PC-9 (cell line): ENCODE measurements at regions of chr10 and their contacts with region 1.

Region 1: GRCh38 chr10:79347226-79347893 is at the start of gene PPIF:
- DNase-seq: peak; percentile 76 to 97
- H3K4me3 ChIP-seq: peak within 1 kb of the TSS; percentile 87
- H3K27ac ChIP-seq: peak within 1 kb of the TSS; percentile 87
- H3K4me1 ChIP-seq: peaks cover 29% of the 10 kb centered on the region
- H3K27me3 ChIP-seq: no peaks in the 10 kb centered on the region
- CTCF ChIP-seq: peak; percentile 98
- total RNA-seq, gene PPIF: 171 and 203 TPM in 2 replicates

Region 2: GRCh38 chr10:79101560-79102497 is 245.5 kb before region 1 on chr10:
- CTCF ChIA-PET with region 1: no interaction called
- POLR2A ChIA-PET with region 1: no interaction called
- intact Hi-C with region 1: no loop called
- DNase-seq: no peak
- H3K4me3 ChIP-seq: no peak overlapping the region
- H3K27ac ChIP-seq: no peak overlapping the region
- H3K4me1 ChIP-seq: no peaks in the 10 kb centered on the region; the same call in 1 of the 2 replicates
- H3K27me3 ChIP-seq: no peaks in the 10 kb centered on the region
- CTCF ChIP-seq: no peak

Region 3: GRCh38 chr10:79298403-79299244 is 48.7 kb before region 1 on chr10:
- CTCF ChIA-PET with region 1: no interaction called
- POLR2A ChIA-PET with region 1: no interaction called
- intact Hi-C with region 1: loop called (anchors 2 kb)
- DNase-seq: peak; percentile 85 to 92
- H3K4me3 ChIP-seq: no peak overlapping the region
- H3K27ac ChIP-seq: peak overlapping the region; percentile 85
- H3K4me1 ChIP-seq: peaks cover 52% of the 10 kb centered on the region
- H3K27me3 ChIP-seq: no peaks in the 10 kb centered on the region
- CTCF ChIP-seq: no peak

Region 4: GRCh38 chr10:79320785-79321493 is 26.4 kb before region 1 on chr10:
- CTCF ChIA-PET with region 1: interaction called, 3 read pairs
- POLR2A ChIA-PET with region 1: interaction called, 3 read pairs
- intact Hi-C with region 1: loop called (anchors 1 kb)
- DNase-seq: peak; percentile 75 to 98
- H3K4me3 ChIP-seq: no peak overlapping the region
- H3K27ac ChIP-seq: peak overlapping the region; percentile 77
- H3K4me1 ChIP-seq: peaks cover 76% of the 10 kb centered on the region
- H3K27me3 ChIP-seq: no peaks in the 10 kb centered on the region
- CTCF ChIP-seq: no peak

Region 5: DNA sequence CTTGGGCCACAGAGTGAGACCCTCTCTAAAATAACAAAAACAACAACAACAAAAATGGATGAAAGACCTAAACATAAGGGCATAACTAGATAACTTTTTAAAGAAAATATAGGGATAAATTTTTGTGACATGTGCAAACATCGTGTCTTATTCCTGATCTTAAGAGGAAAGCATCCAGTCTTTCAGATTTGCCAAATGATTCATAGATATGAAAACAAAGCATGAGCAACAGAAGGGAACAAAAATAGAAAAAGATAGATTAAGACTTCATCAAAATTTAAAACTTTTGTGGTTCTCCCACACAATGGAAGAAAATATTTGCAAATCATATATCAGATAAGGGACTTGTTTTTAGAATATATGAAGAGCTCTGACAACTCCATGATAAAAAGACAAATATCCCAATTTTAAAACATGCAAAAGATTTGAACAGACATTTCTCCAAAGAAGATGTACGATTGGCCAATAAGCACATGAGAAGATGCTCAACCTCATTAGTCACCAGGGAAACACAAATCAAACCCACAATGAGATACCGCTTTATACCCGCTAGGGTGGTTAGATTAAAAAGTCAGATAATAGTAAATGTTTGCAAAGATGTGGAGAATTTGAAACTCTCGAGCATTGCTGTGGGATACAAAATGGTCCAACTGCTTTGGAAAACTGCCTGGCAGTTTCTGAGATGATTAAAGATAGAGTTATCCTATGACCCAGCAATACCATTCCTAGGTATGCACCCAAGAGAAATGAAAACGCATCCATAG is 20.2 kb after region 1 on chr10:
- CTCF ChIA-PET with region 1: no interaction called
- POLR2A ChIA-PET with region 1: no interaction called
- intact Hi-C with region 1: no loop called
- DNase-seq: no peak
- H3K4me3 ChIP-seq: no peak overlapping the region
- H3K27ac ChIP-seq: no peak overlapping the region
- H3K4me1 ChIP-seq: no peaks in the 10 kb centered on the region
- H3K27me3 ChIP-seq: no peaks in the 10 kb centered on the region
- CTCF ChIP-seq: no peak